Activated T-helper 2 cell treated with anti-CD3 and anti-CD28 coated beads, Interferon-gamma antibody, Interleukin-2, Interleukin-4, amounts not matched to agents 10 μg/mL and 5 μg/mL and 100 μg/mL, durations not matched to agents 14 hours and 24 hours and 36 hours (primary cell): ENCODE measurements at regions of chr12 and their contacts with region 1.

Region 1: GRCh38 chr12:56224102-56224701 is at the start of gene NABP2:
- DNase-seq: peak; percentile 94
- H3K4me3 Mint-ChIP-seq: peak within 1 kb of the TSS; percentile 99
- H3K27ac Mint-ChIP-seq: peak within 1 kb of the TSS; percentile 76
- H3K4me1 Mint-ChIP-seq: peaks cover 41% of the 10 kb centered on the region
- H3K27me3 Mint-ChIP-seq: no peaks in the 10 kb centered on the region
- total RNA-seq, gene NABP2: 77.3 and 86.8 TPM in 2 replicates

Region 2: GRCh38 chr12:55862286-55862685 is 361.9 kb before region 1 on chr12:
- intact Hi-C with region 1: no loop called
- DNase-seq: no peak
- H3K4me3 Mint-ChIP-seq: no peak overlapping the region
- H3K27ac Mint-ChIP-seq: no peak overlapping the region
- H3K4me1 Mint-ChIP-seq: no peaks in the 10 kb centered on the region
- H3K27me3 Mint-ChIP-seq: peaks cover 2% of the 10 kb centered on the region

Region 3: DNA sequence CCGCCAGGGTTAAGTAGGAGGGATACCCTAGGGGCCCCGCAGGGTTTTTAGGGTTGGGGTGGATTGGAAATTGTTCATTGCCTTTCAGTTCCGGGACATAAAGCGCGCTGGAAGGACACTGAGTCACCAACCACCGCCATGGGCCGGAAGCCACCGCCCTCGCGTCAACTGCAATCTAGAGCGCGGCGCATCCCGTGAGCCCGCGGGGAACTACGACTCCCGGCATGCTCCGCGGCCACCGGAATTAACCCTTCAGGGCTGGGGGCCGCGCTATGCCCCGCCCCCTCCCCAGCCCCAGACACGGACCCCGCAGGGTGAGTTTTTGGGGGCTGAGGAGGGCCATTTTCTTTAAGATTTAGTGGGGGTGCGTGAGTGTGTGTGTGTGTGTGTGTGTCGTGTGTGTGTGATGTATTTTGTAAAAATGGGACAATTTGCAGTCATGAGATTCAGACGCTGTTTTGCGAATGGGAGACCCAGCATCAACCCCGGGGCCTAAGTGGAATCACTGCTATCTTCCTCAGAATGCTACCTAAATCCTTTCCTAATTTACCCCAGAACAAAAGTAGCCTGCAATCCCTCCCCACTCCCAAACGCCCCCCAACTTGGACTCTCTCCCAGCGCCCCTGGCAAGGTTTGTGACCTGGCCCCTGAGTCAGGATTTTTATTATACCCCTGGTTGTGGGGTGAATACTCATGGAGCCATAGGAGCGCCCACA is 71.7 kb before region 1 on chr12 and contains the start of gene MYL6B:
- intact Hi-C with region 1: loop called (anchors 5 kb)
- DNase-seq: peak; percentile 93
- H3K4me3 Mint-ChIP-seq: peak within 1 kb of the TSS; percentile 95
- H3K27ac Mint-ChIP-seq: peak within 1 kb of the TSS; percentile 98
- H3K4me1 Mint-ChIP-seq: peaks cover 43% of the 10 kb centered on the region
- H3K27me3 Mint-ChIP-seq: no peaks in the 10 kb centered on the region
- total RNA-seq, gene MYL6B: 89.7 and 94.3 TPM in 2 replicates

Region 4: DNA sequence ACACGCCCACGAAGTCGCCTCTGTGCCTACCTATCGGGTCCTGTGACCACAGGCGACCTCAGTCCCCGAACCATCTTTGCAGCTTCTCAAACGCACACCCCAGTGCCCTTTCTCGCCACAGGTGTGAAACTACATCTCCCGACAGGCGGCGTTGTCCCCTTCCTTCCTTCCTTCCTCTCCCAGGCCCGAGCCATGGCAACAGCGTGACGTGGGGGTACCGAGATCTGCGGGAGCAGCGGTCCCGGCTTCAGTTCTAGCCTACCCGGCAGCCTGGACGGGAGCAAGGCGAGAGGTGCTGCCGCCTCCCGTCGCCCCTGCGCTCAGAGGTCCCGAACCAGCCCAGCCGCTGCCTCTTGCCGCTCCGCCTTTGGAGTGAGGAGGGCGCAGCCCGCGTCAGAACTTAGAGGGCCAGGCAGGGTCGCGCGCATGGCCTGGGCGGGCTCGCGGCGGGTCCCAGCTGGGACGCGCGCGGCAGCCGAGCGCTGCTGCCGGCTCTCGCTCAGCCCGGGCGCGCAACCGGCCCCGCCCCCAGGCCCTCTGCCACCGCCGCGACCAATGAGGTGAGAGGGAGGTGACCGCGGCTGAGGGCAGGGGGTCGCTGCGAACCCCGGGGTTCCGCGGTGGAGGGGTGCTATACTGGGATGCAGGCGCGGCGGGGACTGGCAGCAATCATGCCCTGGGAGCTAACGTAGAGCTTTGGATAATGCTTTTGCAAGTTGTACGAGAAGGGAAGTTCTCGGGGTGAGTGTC is 42.7 kb after region 1 on chr12 and contains the start of gene COQ10A:
- intact Hi-C with region 1: loop called (anchors 2 kb)
- DNase-seq: peak; percentile 85
- H3K4me3 Mint-ChIP-seq: peak within 1 kb of the TSS; percentile 96
- H3K27ac Mint-ChIP-seq: peak within 1 kb of the TSS; percentile 87
- H3K4me1 Mint-ChIP-seq: peaks cover 17% of the 10 kb centered on the region
- H3K27me3 Mint-ChIP-seq: no peaks in the 10 kb centered on the region
- total RNA-seq, gene COQ10A: 15.9 and 17.0 TPM in 2 replicates

Region 5: DNA sequence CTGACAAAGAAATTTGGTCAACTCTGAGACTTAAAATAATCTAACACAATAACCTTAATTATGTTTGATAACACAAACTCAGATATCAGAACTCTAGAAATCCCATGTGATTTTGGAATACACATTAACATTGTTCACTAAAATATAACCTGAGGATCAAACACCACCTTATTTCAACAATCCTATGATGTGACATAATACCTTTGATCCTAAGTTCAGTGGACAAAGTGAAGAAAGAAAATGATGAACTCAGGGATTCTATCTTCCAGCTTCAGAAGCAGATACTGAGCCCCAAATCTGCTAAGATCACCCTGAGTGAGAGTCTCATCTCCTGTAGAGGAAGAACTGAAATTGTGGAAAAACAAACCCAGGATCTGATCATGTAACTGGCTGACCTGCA is 174.1 kb after region 1 on chr12:
- intact Hi-C with region 1: no loop called
- DNase-seq: no peak
- H3K4me3 Mint-ChIP-seq: no peak overlapping the region
- H3K27ac Mint-ChIP-seq: no peak overlapping the region
- H3K4me1 Mint-ChIP-seq: no peaks in the 10 kb centered on the region
- H3K27me3 Mint-ChIP-seq: no peaks in the 10 kb centered on the region

Region 6: DNA sequence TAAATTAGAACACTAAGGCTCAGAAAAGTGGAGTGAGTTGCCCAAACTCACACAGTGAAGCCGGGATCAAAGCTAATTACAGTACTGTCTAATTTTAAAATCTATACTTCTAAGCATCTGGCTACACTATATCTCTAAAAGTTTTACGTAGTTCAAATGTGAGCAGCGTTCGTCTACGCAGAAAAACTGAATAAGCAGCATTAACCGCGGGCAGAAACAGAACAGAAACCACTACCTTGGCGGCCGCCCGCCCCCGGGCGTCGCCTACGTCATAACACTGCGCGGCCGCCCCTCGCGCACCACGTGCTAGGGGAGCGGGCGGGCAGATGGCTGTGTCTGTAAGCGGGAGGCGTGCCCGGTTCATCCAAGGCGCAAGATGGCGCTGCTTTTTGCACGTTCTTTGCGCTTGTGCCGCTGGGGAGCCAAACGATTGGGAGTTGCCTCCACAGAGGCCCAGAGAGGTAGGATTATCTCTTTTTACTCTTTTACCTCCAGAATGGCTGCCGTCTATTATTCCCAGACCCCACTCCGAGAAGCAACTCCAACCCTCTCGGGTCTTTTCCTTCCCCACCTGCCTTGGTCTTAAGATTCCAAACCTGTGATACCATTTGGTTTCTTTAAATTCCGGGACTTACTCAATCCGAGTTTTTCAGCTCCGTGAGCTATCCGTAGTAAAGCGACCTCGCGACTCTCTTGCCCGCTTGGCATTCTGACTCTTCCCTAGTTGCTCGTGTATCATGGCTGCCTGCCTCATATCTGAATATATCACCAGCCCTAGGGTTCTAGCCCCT is 244.2 kb after region 1 on chr12 and contains the start of gene SPRYD4:
- intact Hi-C with region 1: loop called (anchors 1 kb)
- DNase-seq: peak; percentile 93
- H3K4me3 Mint-ChIP-seq: peak within 1 kb of the TSS; percentile 98
- H3K27ac Mint-ChIP-seq: peak within 1 kb of the TSS; percentile 98
- H3K4me1 Mint-ChIP-seq: peaks cover 18% of the 10 kb centered on the region
- H3K27me3 Mint-ChIP-seq: no peaks in the 10 kb centered on the region
- total RNA-seq, gene SPRYD4: 4.4 and 4.5 TPM in 2 replicates